Naive thymus-derived CD4-positive, alpha-beta T cell (primary cell): ENCODE measurements at regions of chr14 and their contacts with region 1.

Region 1: DNA sequence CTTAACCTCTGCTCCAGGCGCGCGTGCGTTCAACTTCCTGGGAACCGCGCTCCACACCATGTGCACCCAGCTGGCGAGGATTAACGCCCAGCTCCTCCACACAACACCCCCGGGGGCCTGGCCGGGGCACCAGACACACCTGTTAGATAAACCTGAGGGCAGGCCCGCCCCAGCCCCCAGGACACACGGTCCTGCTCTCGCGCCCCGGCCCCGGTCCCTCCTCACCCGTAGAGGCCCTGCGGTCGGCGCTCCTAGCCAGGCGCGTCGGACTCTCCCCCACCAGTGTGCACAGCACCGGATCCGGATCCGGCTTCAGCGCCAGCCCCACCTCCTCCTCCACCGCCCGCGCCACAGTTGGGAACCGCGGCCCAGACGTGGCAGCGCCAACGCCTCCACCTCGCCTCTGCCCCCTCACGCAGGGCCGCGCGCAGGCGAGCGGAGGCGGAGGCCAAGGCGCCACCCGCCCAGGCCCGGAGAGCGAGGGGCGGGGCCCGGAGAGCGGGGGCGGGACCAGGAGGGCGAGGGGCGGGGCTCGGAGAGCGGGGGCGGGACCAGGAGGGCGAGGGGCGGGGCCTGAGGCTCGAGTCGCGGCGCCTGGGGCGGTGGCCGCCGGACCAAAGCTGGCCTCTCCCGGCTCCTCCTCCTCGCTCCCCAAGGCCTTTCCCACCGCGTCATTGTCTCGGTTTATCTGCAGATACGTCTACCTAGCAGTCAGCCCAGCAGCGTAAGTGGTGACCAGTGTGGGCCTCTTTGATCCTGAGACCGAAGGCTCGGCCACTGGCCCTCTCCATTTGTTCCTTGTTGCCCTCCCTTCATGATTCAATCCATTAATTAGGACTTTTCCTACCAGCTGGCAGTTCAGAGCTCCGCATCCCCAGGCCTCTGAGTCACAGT is at the start of gene GNPNAT1:
- DNase-seq: peak; percentile 85 to 92 (median 89)
- ATAC-seq: peak; percentile 98
- H3K4me3 ChIP-seq: peak within 1 kb of the TSS; percentile 87
- H3K4me3 Mint-ChIP-seq: peak within 1 kb of the TSS; percentile 86 to 94 (median 93)
- H3K27ac ChIP-seq: peak within 1 kb of the TSS; percentile 74
- H3K27ac Mint-ChIP-seq: peak within 1 kb of the TSS; percentile 75 to 96 (median 89)
- H3K4me1 ChIP-seq: peaks cover 15 to 18% of the 10 kb centered on the region in 2 donors
- H3K4me1 Mint-ChIP-seq: peaks cover 23 to 48% (median 44%) of the 10 kb centered on the region in 7 donors
- H3K27me3 ChIP-seq: no peaks in the 10 kb centered on the region
- H3K27me3 Mint-ChIP-seq: no peaks in the 10 kb centered on the region
- total RNA-seq, gene GNPNAT1: 4.6 to 14.7 (median 8.5) TPM

Region 2: DNA sequence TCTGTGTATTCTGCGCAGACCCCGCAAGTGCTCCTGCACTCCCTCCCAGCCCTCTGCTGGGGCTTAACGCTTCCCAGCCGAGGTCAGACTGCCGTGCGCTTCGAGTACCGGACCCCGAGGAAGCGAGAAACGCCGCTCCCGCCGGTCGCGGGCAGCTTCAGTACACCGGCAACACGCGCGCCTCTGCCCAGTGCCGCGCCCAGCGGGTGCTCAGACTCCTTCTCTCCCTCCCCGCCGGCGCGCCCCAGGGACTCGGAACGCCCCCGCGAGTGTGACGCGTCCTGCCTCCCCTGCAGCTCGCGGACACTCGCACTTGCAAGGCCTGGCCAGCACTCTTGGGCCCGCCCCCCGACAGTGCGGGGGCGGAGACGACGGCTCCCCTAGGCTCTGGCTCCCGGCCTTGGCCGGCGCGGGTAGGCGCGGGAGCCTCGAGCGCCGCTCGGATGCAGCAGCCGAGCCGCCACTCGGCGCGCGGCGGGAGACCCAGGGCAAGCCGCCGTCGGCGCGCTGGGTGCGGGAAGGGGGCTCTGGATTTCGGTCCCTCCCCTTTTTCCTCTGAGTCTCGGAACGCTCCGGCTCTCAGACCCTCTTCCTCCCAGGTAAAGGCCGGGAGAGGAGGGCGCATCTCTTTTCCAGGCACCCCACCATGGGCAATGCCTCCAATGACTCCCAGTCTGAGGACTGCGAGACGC is 477.4 kb before region 1 on chr14 and contains the start of gene PTGER2:
- CTCF ChIA-PET with region 1: no interaction called
- POLR2A ChIA-PET with region 1: no interaction called
- intact Hi-C with region 1: loop called in 1 of 2 experiments (anchors 2 kb)
- DNase-seq: peak; percentile 12 to 91 (median 34)
- ATAC-seq: peak; percentile 79
- H3K4me3 ChIP-seq: peak within 1 kb of the TSS; percentile 80
- H3K4me3 Mint-ChIP-seq: peak within 1 kb of the TSS; percentile 88 to 100 (median 98)
- H3K27ac ChIP-seq: peak within 1 kb of the TSS; percentile 62
- H3K27ac Mint-ChIP-seq: peak within 1 kb of the TSS; percentile 51 to 98 (median 92)
- H3K4me1 ChIP-seq: peaks cover 14 to 26% of the 10 kb centered on the region in 2 donors
- H3K4me1 Mint-ChIP-seq: peaks cover 48 to 81% (median 57%) of the 10 kb centered on the region in 7 donors
- H3K27me3 ChIP-seq: no peaks in the 10 kb centered on the region
- H3K27me3 Mint-ChIP-seq: peaks cover 0 to 5% (median 0%) of the 10 kb centered on the region in 5 donors
- total RNA-seq, gene PTGER2: 1.7 to 162 (median 15.2) TPM

Region 3: DNA sequence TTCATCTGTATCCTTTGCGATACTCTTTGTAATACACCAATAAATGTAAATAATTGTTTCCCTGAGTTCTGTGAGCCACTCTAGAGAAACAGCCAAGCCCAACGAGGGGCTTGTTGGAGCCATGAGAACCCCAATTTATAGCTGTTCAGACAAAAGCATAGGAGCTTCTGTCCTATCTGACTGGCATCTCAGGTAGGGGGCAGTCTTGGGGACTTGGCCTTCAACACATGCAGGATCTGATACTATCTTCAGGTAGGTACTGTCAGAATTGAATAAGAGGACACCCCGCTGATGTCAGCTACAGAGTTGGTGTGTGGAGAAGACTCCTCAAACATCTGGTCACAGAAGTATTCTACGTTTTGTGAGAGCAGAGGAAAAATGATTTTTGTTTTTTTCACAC is 264.4 kb before region 1 on chr14:
- CTCF ChIA-PET with region 1: no interaction called
- POLR2A ChIA-PET with region 1: no interaction called
- intact Hi-C with region 1: no loop called
- DNase-seq: no peak
- ATAC-seq: no peak
- H3K4me3 ChIP-seq: no peak overlapping the region
- H3K4me3 Mint-ChIP-seq: no peak overlapping the region
- H3K27ac ChIP-seq: no peak overlapping the region
- H3K27ac Mint-ChIP-seq: no peak overlapping the region
- H3K4me1 ChIP-seq: no peaks in the 10 kb centered on the region
- H3K4me1 Mint-ChIP-seq: peaks cover 0 to 2% (median 0%) of the 10 kb centered on the region in 7 donors
- H3K27me3 ChIP-seq: no peaks in the 10 kb centered on the region
- H3K27me3 Mint-ChIP-seq: no peaks in the 10 kb centered on the region

Region 4: DNA sequence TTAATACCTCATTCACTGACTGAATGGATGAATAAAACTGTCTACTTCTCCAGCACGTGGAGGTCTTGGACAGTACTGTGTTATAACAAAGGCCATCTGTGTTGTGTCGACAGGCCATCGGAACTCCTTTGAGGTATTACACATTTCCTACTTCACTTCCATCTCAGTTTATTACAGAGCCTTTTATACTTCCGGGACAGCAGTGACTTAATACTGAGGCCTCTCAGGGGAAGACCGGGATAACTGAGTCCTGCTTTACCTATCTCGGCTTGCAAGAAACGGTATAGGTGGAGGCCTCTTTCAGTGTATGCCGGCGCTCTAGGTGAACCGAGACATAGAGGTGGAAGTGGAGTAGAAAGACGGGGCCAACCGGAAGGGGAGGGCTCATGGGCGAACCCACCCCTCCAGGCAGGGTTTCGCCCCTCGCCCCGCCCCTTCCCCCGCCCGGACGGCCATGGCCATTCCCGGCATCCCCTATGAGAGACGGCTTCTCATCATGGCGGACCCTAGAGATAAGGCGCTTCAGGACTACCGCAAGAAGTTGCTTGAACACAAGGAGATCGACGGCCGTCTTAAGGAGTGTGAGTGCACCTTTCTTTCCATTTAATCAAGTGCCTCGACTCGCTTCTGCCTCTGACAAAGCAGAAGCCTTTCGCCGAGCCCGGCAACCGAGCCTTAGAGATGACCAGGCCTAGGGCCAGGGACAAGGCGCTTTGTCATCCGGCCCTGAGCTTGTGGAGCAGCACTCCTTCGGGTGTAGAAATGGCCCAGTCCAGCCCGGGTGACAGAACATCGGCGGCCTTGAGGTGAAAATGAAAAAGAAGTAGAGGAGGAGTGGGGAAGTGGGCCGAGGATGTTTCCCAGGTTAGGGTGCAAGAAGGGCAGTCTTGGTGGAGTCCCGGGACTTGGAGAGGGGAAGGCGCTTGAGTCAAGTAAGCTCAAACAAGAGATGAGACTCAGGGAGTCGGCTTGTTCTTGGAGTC is 84.4 kb before region 1 on chr14 and contains the start of gene PSMC6:
- CTCF ChIA-PET with region 1: no interaction called
- POLR2A ChIA-PET with region 1: interaction called, 5 read pairs
- intact Hi-C with region 1: loop called (anchors 1 kb)
- DNase-seq: peak; percentile 82 to 93 (median 90)
- ATAC-seq: peak; percentile 99
- H3K4me3 ChIP-seq: peak within 1 kb of the TSS; percentile 74
- H3K4me3 Mint-ChIP-seq: peak within 1 kb of the TSS; percentile 96 to 100 (median 98)
- H3K27ac ChIP-seq: peak within 1 kb of the TSS; percentile 82
- H3K27ac Mint-ChIP-seq: peak within 1 kb of the TSS; percentile 95 to 98 (median 97)
- H3K4me1 ChIP-seq: peaks cover 11 to 16% of the 10 kb centered on the region in 2 donors
- H3K4me1 Mint-ChIP-seq: peaks cover 28 to 60% (median 52%) of the 10 kb centered on the region in 7 donors
- H3K27me3 ChIP-seq: no peaks in the 10 kb centered on the region
- H3K27me3 Mint-ChIP-seq: no peaks in the 10 kb centered on the region
- total RNA-seq, gene PSMC6: 84.8 to 131 (median 95.9) TPM

Region 5: DNA sequence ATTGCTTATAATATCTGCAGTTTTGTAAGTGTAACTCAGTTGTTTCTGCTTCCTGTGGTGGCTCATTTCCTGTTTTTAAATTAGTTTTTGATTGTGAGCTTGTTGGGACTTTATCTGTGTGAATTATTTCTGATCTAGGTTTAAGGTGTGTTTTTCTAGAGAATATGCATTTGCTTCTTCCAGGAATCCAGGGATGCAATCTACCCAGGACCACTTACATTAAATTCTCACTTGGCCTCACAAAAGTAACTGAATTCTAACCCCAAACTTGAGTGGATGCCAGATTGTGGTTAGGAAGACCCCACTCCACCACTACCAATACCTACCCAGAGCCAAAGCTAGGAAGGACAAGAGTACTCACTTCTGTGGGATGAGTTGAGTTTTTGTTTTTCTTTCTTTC is 49.6 kb before region 1 on chr14:
- CTCF ChIA-PET with region 1: interaction called, 3 read pairs
- POLR2A ChIA-PET with region 1: interaction called, 21 read pairs
- intact Hi-C with region 1: loop called (anchors 1 to 5 kb)
- DNase-seq: peak in 7 of 9 donors; percentile 13 to 52 (median 40)
- ATAC-seq: peak; percentile 60
- H3K4me3 ChIP-seq: peak overlapping the region; percentile 54
- H3K4me3 Mint-ChIP-seq: peak overlapping the region; percentile 75 to 93 (median 84)
- H3K27ac ChIP-seq: peak overlapping the region; percentile 68
- H3K27ac Mint-ChIP-seq: peak overlapping the region; percentile 92 to 100 (median 96)
- H3K4me1 ChIP-seq: peaks cover 48 to 64% of the 10 kb centered on the region in 2 donors
- H3K4me1 Mint-ChIP-seq: peaks cover 42 to 90% (median 74%) of the 10 kb centered on the region in 7 donors
- H3K27me3 ChIP-seq: no peaks in the 10 kb centered on the region
- H3K27me3 Mint-ChIP-seq: no peaks in the 10 kb centered on the region

Region 6: GRCh38 chr14:52802597-52802996 is 11.1 kb after region 1 on chr14:
- CTCF ChIA-PET with region 1: no interaction called
- POLR2A ChIA-PET with region 1: no interaction called
- intact Hi-C with region 1: no loop called
- DNase-seq: no peak
- ATAC-seq: no peak
- H3K4me3 ChIP-seq: no peak overlapping the region
- H3K4me3 Mint-ChIP-seq: no peak overlapping the region
- H3K27ac ChIP-seq: no peak overlapping the region
- H3K27ac Mint-ChIP-seq: no peak overlapping the region
- H3K4me1 ChIP-seq: no peaks in the 10 kb centered on the region
- H3K4me1 Mint-ChIP-seq: peaks cover 8 to 24% (median 15%) of the 10 kb centered on the region in 7 donors
- H3K27me3 ChIP-seq: no peaks in the 10 kb centered on the region
- H3K27me3 Mint-ChIP-seq: peaks cover 0 to 14% (median 0%) of the 10 kb centered on the region in 5 donors

Region 7: DNA sequence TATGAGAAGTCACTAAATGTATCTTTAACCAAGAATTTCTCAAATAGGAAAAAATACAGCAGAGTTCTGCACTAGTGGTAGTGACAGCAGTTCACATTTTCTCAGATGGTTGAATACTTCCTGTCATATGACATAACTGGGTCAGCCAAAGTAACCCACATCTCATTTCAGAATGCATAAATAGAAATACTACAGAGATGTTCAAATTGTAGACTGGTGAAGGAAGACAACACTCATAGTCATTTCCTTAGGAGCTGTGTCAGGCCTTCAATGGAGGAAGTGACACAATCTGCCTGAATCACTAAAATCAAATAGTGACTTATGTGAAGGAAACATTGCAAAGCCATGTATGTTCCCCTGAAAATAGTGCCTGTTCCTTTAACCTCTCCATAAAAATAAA is 127.0 kb after region 1 on chr14:
- CTCF ChIA-PET with region 1: no interaction called
- POLR2A ChIA-PET with region 1: interaction called, 3 read pairs
- intact Hi-C with region 1: loop called in 1 of 2 experiments (anchors 1 kb)
- DNase-seq: peak in 7 of 9 donors; percentile 55 to 81 (median 75)
- ATAC-seq: peak; percentile 99
- H3K4me3 ChIP-seq: no peak overlapping the region
- H3K4me3 Mint-ChIP-seq: peak overlapping the region in 3 of 10 donors; percentile 1 to 26 (median 22)
- H3K27ac ChIP-seq: peak overlapping the region; percentile 55
- H3K27ac Mint-ChIP-seq: peak overlapping the region; percentile 65 to 93 (median 81)
- H3K4me1 ChIP-seq: peaks cover 18 to 20% of the 10 kb centered on the region in 2 donors
- H3K4me1 Mint-ChIP-seq: peaks cover 15 to 37% (median 30%) of the 10 kb centered on the region in 7 donors
- H3K27me3 ChIP-seq: no peaks in the 10 kb centered on the region
- H3K27me3 Mint-ChIP-seq: peaks cover 0 to 2% (median 0%) of the 10 kb centered on the region in 5 donors

Region 8: DNA sequence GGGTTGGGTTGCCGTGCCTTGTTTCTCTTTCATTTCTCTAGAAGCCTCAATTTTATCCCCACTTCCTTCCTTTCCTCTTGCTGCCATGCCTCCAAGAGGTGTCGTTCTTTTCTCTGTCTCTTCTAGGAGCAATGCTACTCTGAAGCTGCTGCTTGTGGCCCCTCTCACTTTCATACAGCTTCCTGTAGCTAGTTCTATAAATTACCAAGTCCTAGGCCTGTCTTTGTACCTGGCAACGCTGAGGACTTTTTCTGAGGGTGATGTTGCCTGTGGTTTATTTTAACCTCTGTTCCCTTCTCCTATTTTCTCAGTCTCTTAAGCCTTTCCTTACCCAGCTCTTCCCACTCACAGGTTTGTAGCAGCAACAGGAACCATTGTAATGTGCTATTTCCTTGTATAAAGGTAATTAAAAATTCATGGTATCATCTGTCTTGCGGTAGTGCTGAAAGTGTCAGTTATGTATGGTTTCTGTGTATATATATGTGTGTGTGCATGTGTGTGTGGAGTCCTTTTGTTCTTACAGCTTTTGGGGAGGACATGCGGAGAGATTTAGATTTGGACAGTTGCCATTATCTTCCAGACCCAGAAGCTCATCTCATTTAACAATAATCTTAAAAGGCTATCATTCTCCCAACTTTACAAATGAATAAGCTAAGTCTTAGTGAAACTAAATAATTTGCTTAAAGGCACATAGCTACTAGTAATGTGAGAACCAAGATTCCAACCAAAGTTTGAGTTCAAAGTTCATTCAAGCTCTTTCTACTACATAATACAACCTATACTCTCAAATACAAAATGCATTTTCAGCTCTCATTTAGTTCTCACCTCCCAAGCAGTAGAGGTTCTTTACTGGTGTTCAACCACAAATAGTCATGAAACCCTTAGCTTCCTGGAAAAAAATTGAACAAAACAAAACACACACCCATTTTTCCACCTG is 317.9 kb after region 1 on chr14:
- CTCF ChIA-PET with region 1: no interaction called
- POLR2A ChIA-PET with region 1: no interaction called
- intact Hi-C with region 1: no loop called
- DNase-seq: peak in 8 of 9 donors; percentile 37 to 62 (median 57)
- ATAC-seq: peak; percentile 85
- H3K4me3 ChIP-seq: peak overlapping the region; percentile 70
- H3K4me3 Mint-ChIP-seq: no peak overlapping the region
- H3K27ac ChIP-seq: peak overlapping the region; percentile 67
- H3K27ac Mint-ChIP-seq: no peak overlapping the region
- H3K4me1 ChIP-seq: peaks cover 28 to 29% of the 10 kb centered on the region in 2 donors
- H3K4me1 Mint-ChIP-seq: peaks cover 10 to 46% (median 16%) of the 10 kb centered on the region in 7 donors
- H3K27me3 ChIP-seq: no peaks in the 10 kb centered on the region
- H3K27me3 Mint-ChIP-seq: no peaks in the 10 kb centered on the region